CD4-positive, alpha-beta T cell (primary cell): ENCODE measurements at regions of chr11 and their contacts with region 1.

Region 1: DNA sequence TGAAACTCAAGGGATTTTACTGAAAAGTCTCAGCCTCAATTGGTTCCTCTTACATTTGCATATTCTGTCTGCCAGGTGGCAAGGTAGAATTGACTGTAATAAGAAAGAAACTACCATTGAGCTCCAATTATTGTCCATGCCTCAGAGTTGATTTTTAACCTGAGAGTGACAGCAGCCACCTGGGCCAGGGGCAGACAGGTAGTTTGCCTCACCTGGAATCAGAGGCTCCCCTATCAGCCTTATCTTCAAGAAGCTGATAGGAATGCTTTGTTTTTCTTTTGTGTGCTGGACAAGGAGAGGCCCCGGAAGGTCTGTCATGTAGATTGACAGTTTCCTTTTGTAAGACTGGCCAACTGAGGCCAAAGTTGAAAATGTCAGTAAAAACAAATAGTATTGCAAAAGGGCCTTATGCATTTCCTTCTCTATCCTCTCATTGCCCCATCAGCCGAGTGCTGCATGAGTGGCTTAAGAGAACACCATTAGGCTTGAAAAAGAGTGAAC is 34.1 kb downstream of the CD44 start:
- DNase-seq: no peak
- ATAC-seq: no peak
- H3K4me3 ChIP-seq: peak overlapping the region; percentile 1
- H3K4me3 Mint-ChIP-seq: peak overlapping the region; percentile 72
- H3K27ac ChIP-seq: peak overlapping the region; percentile 74
- H3K27ac Mint-ChIP-seq: peak overlapping the region; percentile 96
- H3K4me1 ChIP-seq: peaks cover 90% of the 10 kb centered on the region
- H3K4me1 Mint-ChIP-seq: peaks cover 95% of the 10 kb centered on the region
- H3K27me3 ChIP-seq: no peaks in the 10 kb centered on the region
- H3K27me3 Mint-ChIP-seq: no peaks in the 10 kb centered on the region
- CTCF ChIP-seq: no peak

Region 2: DNA sequence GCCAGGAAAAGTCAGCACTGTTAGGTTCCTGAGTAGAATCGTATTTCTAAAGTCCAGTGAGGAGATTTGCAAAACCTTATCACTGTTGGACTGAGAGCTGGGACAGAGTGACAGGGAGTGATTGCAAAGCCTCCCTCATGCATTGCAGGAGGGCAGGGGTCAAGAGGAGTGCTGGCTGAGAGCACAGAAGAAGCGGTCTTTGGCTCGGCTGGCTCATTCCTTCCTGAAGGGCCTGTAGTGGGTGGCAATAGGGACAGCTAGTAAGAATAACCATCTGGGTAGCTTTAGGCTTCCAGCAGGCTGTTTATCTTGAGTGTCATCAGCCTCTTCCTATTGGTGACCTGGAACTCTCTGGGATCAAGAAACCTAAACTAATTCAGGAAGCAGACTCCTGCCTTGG is 19.3 kb after region 1 on chr11:
- CTCF ChIA-PET with region 1: interaction called, 3 read pairs
- POLR2A ChIA-PET with region 1: interaction called, 28 read pairs
- intact Hi-C with region 1: loop called in 1 of 2 experiments (anchors 2 kb)
- DNase-seq: no peak
- ATAC-seq: no peak
- H3K4me3 ChIP-seq: no peak overlapping the region
- H3K4me3 Mint-ChIP-seq: peak overlapping the region; percentile 42
- H3K27ac ChIP-seq: peak overlapping the region in 1 of 2 donors; percentile 32
- H3K27ac Mint-ChIP-seq: peak overlapping the region; percentile 85
- H3K4me1 ChIP-seq: peaks cover 42% of the 10 kb centered on the region
- H3K4me1 Mint-ChIP-seq: peaks cover 100% of the 10 kb centered on the region
- H3K27me3 ChIP-seq: no peaks in the 10 kb centered on the region
- H3K27me3 Mint-ChIP-seq: no peaks in the 10 kb centered on the region
- CTCF ChIP-seq: no peak

Region 3: DNA sequence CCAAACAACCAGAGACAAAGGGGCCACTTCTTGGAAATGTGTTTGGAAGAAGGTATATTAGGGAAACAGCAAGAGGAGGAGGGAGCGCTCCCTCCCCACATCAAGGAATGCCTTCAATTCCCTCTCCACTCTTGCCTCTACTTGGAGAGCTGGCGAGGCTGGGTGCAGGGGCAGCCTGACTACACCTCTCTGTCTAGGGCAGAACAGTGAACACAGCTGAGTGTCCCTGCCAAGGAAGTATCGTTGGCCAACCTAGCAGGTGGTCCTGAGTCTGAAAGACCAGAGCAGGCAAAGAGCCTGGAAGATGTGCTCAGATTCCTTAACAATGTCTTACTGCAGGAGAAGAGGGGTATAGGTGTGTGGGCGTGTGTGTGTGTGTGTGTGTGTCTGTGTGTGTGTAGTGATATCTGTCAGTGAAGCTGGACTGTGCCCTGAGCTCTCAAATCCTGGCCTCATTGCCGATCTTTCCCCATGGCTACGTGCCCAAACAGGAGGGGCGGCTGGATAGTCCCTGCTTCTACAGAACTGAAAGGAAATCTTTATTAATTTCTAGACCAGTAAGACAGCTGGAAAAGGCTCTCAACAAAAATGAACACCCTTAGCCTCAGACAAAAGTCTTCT is 305.5 kb after region 1 on chr11:
- CTCF ChIA-PET with region 1: no interaction called
- POLR2A ChIA-PET with region 1: no interaction called
- intact Hi-C with region 1: no loop called
- DNase-seq: no peak
- ATAC-seq: no peak
- H3K4me3 ChIP-seq: no peak overlapping the region
- H3K4me3 Mint-ChIP-seq: no peak overlapping the region
- H3K27ac ChIP-seq: no peak overlapping the region
- H3K27ac Mint-ChIP-seq: no peak overlapping the region
- H3K4me1 ChIP-seq: no peaks in the 10 kb centered on the region
- H3K4me1 Mint-ChIP-seq: peaks cover 9% of the 10 kb centered on the region
- H3K27me3 ChIP-seq: peaks cover 0 to 16% of the 10 kb centered on the region in 2 experiments
- H3K27me3 Mint-ChIP-seq: peaks cover 53% of the 10 kb centered on the region
- CTCF ChIP-seq: no peak